Aorta (tissue), 5 donors: ENCODE measurements at regions of chr1 and their contacts with region 1.

Region 1: DNA sequence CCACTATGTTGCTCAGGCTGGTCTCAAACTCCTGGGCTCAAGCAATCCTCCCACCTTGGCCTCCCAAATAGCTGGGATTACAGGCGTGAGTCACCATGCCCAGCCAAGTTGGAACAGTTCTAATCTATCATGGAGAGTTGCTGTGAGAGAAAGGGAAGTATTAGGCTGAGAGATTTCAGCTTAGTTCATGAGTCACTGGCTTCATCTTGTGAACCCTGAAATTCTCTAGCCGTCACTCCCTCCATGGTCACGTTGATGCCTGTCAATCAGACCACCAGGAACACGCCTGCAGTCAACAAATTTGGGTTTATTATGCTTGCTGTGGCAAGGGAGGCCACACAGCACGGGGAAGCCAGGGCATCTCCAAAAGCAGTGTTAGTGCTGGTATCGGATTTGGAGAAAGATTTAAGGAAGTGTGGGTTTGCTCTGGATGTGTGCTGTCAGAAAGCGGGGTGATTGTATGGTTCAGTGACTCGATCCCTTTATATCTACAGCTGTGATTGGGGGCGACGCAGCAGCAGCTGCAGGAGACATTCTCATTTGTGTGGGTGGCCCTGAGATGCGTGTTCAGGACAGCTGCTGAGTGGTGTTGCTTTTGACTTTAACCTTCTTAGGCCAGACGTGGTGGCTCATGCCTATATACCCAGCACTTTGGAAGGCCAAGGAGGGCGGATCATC is 18.7 kb downstream of the UQCRHL start:
- DNase-seq: no peak
- ATAC-seq: no peak
- H3K4me3 ChIP-seq: no peak overlapping the region
- H3K27ac ChIP-seq: peak overlapping the region in 1 of 2 donors; percentile 31
- H3K4me1 ChIP-seq: peaks cover 0 to 2% of the 10 kb centered on the region in 2 donors
- H3K27me3 ChIP-seq: no peaks in the 10 kb centered on the region

Region 2: DNA sequence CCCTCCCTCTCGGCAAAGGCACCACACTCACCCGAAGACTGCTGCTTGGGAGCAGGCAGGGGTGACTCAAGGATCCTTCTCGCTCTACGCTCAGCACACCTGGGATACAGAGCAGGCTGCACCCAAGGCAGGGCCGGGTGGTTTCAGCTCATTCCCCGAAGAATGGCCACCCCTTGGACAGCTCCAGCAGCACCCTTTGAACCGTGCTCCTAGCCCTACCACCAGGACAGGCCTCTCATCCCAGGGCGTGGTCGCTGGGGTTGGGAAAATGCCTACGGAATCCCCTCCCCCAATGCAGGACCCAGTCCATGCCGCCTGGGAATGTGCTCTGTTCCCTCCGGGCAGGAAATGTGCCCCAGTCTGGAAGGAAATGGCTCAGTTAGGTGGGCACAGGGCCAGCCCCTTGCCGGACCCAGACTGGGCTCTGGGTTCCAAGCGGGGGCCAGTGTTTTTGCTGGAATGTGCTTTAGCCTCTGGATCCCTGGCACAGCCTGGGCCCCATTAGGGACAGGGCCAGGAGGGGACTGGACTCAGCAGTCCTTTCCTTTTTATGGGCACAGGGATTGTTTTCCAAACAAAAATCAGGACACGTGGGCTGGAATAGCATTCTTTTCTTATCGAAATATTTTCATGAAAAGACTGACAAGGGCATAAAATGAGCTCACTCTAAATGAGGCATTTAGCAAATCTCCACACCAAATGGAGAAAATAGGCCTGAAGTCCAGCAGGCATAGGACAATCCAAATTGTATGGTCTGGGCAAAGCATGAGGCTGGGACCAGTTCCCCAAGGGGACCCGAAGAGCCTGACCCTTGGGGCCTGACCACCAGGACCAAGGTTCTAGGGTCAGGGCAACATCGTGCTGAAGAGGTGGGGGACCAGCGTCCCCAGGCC is 39.1 kb before region 1 on chr1:
- intact Hi-C with region 1: loop called in 1 of 2 experiments (anchors 5 kb)
- DNase-seq: peak; percentile 96 to 97
- ATAC-seq: peak; percentile 87
- H3K4me3 ChIP-seq: no peak overlapping the region
- H3K27ac ChIP-seq: peak overlapping the region; percentile 83 to 97
- H3K4me1 ChIP-seq: no peaks in the 10 kb centered on the region
- H3K27me3 ChIP-seq: no peaks in the 10 kb centered on the region

Region 3: DNA sequence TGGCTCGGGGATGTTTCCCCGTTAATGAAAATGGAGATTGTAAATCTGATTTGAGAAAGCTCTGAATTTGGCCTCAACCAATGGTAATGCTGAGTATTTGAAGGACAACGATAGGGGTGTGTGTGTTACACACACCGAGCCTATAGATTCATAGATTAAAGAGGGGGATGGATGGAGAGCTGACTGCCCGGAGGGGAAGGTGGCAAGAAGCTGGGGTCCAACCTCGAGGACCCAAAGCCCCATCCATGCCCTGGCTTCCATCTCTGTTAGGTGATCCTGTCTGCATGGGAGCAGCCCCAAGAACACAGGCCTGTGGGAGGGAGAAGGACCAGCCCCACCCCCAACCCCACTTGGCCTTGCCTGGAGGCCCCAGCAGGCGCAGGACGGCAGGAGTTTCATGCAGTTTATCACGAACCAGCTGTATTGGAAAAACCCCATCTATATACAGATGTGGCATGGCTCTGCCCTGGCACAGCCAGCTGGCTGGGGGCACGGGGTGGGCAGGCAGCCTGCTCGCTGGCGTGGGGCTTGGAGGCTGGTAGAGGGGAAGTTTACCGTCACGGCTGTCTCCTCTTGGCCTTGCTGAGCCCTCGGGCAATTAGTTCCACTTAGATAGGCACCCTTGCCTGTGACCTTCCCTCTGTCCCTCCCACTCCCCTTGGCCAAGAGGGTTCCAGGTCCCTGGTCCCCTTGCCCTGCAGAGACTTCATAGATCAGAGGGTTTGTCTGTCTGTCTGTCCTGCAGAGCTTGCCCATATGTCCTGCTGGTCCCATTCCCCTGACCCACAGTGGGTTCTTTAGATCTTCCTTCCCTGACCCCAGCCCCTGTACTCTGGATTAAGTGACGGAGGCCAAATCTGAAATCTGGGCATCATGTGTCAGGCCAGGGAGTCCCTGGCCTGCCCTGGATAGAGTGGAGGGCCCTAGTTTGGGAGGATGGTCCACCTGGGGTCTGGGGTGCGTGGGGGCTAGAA is 226.0 kb after region 1 on chr1:
- intact Hi-C with region 1: loop called in 1 of 2 experiments (anchors 2 kb)
- DNase-seq: peak; percentile 87
- ATAC-seq: no peak
- H3K4me3 ChIP-seq: no peak overlapping the region
- H3K27ac ChIP-seq: peak overlapping the region; percentile 83 to 98
- H3K4me1 ChIP-seq: peaks cover 0 to 2% of the 10 kb centered on the region in 2 donors
- H3K27me3 ChIP-seq: no peaks in the 10 kb centered on the region